ENCODE measurements at regions of chrX and their contacts with region 1.

Region 1: GRCh38 chrX:53317365-53318069 is 36.1 kb upstream of the IQSEC2 start:
- DNase-seq: peak; percentile 22 to 92
- H3K4me3 ChIP-seq: no peak overlapping the region
- CTCF ChIP-seq: peak in 1 of 3 donors; percentile 10
- POLR2A ChIP-seq: no peak

Region 2: DNA sequence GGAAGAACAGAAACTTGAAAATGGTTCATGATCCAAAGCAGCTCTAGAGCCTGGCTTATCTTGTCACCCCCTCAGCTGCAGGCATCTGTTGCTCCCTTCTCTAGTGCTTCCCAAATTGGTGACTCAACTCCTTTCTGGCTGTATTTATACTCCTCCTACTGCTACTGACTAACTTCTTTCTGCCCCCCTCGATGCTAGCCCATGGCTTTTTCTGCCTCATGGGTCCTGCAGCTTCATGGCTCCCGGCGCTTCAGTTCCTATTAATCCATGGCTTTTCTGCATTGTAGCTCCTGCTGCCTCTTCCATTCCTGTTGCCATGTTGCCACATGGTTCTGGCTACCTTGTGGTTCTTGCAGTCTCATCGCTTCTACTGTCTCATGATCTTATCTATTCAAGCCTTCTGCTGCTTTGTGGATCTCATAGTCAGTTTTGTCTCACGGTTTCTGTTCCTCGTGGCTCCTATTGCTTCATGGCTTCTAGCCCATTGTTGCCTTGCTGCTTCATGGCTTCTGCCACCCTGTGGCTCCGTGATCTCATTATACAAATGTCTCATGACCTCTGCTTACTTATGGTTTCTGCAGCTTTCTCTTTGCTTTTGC is 56.8 kb after region 1 on chrX:
- intact Hi-C with region 1: loop called (anchors 10 kb)
- DNase-seq: no peak
- H3K4me3 ChIP-seq: no peak overlapping the region
- CTCF ChIP-seq: no peak
- POLR2A ChIP-seq: no peak

Region 3: DNA sequence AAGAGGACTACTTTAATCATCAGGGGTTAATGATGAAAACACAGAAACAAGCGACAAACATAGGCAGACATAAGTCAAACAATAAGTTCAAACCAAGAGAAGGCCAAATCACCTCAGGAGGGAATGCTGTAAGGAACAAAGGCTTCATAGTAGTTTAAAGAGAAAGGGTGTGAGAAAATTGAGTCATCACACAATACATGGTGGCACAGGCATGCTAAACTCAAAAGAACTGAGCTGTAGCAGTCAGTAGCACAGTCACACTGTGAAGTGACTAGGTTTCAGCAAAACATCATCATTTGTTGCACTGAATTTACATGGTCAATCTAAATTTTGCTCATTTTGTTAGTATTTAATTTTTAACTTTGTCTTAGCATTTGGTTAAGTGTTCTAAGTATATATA is 80.7 kb after region 1 on chrX:
- intact Hi-C with region 1: no loop called
- DNase-seq: no peak
- H3K4me3 ChIP-seq: no peak overlapping the region
- CTCF ChIP-seq: no peak
- POLR2A ChIP-seq: no peak

Region 4: DNA sequence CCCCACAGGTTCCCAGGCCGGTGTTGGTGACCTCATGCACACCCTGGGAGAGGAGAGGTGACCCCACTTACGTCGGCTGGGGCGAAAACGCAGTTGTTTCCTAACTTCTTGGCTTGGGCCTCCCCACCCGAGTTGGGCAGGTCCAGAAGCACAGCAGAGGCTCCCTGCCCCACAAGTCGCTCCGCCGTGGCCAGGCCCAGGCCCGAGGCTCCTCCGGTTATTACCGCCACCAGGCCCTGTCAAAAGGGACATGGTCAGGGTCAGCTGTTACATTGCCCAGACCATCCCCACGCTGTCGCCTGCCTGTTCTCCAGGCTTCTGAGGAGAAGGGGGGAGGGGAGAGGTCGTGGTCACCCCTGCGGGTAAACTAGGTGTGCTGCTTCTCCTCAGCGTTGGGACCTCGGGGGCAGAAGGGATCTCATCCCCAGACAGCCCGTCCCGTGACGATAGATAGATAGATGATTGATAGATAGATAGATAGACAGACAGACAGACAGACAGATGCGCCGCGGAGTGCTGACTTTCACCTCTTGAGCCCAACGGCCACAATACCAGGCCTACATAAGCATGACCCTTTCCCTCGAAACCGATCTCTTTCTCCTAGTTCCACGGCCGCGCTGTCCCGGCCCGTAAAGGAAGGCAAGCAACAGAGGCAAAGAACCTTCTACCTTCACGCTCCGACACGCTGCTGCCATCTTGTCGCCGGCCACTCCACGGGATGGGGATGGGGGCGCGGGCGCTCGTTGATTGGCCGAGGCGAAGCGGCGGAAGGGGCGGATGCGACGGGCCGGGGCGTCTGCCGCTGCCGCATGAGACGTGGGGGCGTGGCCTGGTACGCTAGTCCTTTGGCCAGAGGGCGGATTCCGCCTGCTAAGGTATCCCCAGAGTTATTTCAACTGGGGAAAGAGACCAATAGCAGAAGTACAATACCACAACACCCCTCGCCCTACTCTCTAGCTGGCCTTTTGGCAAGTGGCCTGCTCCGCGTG is 116.4 kb after region 1 on chrX and contains the start of gene HSD17B10:
- intact Hi-C with region 1: loop called (anchors 10 kb)
- DNase-seq: peak; percentile 81 to 97
- H3K4me3 ChIP-seq: peak within 1 kb of the TSS; percentile 48
- CTCF ChIP-seq: no peak
- POLR2A ChIP-seq: no peak
- total RNA-seq, gene HSD17B10: 61.2 to 109 (median 83.3) TPM